ENCODE measurements at regions of chr20 and their contacts with region 1.

Region 1: DNA sequence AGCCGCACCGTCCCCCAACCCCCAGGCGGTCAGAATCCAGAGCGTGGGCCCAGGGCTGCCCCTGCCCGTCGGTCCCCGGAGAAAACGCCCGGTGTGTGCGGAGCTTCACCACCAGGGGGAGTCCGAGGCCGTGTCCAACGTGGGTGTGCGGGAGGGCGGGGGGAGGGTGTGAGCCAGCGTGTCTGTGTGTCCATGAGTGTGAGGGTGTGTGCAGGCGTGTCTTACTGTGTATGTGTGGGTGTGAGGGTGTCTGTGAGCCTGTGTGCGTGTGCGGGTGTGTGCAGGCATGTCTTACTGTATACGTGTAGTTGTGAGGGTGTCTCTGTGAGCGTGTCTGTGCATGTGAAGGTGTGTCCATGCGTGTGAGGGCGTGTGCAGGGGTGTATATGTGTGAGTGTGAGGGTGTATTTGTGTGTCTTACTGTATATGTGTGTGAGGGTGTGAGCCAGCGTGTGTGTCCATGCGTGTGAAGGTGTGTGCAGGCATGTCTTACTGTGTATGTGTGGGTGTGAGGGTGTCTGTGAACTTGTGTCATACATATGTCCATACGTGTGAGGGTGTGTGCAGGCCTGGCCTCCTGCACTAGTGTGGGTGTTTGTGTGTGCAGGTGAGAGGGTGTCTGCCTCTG is 24.6 kb upstream of the GATA5 start:
- DNase-seq: peak; percentile 91
- ATAC-seq: peak; percentile 75

Region 2: DNA sequence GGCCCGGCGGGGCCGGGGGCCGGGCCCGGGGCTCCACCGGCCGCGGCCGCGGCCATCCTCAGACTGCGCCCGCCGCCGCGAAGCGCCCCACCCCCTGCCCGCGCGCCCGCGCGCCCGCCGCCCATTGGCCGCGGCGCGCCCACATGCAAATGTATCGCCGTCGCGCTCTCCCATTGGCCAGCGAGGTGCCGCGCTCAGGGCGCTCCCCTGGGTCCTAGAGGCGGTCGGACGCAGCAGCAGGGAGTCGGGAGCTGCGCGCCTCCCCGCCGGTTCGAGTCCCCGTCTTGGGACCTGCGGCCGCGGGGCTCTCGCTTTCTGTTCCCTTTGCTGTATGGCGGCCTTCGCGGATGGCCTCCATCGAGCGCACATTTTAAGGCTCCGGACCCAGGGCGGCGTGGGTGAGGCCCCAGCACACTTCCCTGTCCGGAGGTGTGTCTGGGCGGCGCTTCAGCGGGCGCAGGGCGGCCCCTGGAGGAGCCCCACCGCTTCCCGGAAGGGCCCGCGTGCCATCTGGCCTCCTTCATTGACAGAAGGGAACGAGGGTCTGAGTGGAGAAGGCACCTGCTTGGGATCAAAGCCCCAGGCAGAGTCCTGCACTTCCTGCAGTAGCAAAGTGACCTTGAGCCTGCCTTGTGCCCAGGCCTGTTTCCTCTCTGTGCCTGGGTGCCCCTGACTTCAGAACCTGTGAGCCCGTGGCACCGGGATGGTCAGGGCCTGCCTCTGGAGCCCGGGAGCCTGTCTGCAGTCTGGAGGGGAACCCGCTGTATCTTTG is 92.9 kb before region 1 on chr20 and contains the start of gene CABLES2:
- intact Hi-C with region 1: loop called (anchors 5 kb)
- DNase-seq: peak; percentile 98
- ATAC-seq: peak; percentile 93
- total RNA-seq, gene CABLES2: 18.1 TPM

Region 3: DNA sequence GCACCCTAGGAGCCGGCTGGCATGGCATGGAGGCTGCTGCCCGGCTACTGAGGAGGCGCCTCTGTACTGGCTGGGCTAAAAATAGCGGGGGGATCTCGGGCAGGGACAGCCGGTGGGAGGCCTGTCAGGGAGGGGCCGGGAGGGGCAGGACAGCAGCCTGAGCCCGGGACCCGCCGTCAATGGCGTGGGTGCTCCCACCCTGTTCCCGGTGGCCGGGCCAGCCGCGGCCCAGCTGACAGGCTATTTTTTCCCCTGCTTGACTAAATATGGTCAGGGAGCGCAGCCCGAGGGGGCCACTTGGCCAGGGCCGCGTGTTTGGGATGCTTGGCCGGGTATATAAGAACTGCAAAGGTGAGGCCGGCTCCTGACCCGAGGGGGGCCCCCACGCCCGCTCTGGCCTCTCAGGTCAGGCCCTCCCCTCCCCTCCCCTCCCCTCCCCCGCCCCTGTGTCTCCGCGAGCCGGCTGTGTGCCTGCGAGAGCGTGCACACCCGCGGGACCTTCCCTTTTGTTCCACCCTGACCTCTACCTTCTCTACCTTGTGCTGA is 49.8 kb after region 1 on chr20:
- intact Hi-C with region 1: loop called (anchors 5 kb)
- DNase-seq: peak; percentile 89
- ATAC-seq: peak; percentile 88

Region 4: GRCh38 chr20:62616728-62617621 is 116.6 kb after region 1 on chr20:
- intact Hi-C with region 1: loop called (anchors 1 kb)
- DNase-seq: peak; percentile 91
- ATAC-seq: peak; percentile 84

Region 5: DNA sequence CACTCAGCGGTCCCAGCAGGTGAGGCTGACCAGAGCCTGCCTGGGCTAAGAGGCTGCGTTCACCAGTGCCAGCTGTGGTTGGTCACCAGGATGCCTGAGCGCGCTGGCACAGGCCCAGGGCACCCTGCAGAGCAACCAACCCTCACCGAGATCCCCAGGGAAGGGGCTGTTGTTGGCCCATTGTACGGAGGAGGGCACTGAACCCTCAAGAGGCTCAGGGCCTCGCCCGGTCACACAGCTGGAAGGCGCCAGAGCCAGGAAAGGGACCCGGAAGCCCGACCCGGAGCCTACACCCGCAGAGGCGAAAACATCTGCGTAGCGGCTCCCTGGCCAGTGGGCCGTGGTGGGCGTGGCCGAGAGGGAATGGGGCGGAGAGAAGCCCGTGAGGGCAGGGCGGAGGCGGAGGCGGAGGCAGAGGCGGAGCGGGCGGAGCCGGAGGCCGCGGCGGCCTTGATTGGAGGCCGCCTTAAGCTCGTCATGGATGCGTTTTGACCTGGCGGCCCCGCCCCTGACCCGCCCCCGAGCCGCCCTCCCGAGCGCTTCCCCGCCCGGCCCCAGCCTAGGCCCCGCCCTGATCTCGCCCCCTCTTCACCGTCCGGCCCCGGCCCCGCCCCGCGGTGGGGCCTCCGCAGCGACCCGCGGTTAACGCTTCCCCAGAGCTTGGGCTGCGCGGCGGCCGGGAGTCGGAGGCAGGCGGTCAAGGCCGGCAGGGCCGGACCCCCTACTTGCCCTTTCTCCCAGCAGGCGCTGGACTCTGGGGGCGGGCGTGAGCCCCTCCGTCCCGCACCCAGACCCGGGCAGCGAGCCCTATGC is 293.8 kb after region 1 on chr20:
- intact Hi-C with region 1: loop called (anchors 5 kb)
- DNase-seq: peak; percentile 99
- ATAC-seq: peak; percentile 94